CD8-positive, alpha-beta T cell (primary cell): ENCODE measurements at regions of chr20 and their contacts with region 1.

Region 1: DNA sequence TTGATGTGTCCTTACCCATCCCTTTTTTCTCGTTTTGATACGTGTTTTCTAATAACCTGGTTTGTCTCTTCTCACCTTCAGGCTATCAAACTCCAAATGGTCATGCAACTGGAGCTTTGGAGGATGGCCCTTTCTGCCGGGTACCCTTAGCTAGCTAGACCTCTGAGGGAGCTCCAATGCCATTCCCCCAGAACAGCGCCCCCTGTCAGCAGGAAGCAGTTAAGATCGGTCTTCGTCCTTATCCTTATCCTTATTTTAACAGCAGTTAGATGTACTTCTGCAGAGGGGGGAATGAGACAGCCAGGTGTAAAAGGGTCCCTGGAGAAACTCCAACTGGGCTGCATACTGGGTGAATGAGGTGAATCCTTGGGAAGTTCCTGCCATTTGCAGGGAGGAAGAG is 37.2 kb downstream of the SEL1L2 start:
- DNase-seq: no peak
- ATAC-seq: no peak
- H3K4me3 ChIP-seq: no peak overlapping the region
- H3K4me3 Mint-ChIP-seq: no peak overlapping the region
- H3K27ac ChIP-seq: no peak overlapping the region
- H3K27ac Mint-ChIP-seq: no peak overlapping the region
- H3K4me1 ChIP-seq: no peaks in the 10 kb centered on the region
- H3K4me1 Mint-ChIP-seq: no peaks in the 10 kb centered on the region
- H3K27me3 ChIP-seq: no peaks in the 10 kb centered on the region
- H3K27me3 Mint-ChIP-seq: no peaks in the 10 kb centered on the region
- CTCF ChIP-seq: no peak

Region 2: GRCh38 chr20:13930281-13930680 is 22.9 kb before region 1 on chr20:
- CTCF ChIA-PET with region 1: no interaction called
- POLR2A ChIA-PET with region 1: no interaction called
- intact Hi-C with region 1: no loop called
- DNase-seq: no peak
- ATAC-seq: no peak
- H3K4me3 ChIP-seq: no peak overlapping the region
- H3K4me3 Mint-ChIP-seq: no peak overlapping the region
- H3K27ac ChIP-seq: no peak overlapping the region
- H3K27ac Mint-ChIP-seq: no peak overlapping the region
- H3K4me1 ChIP-seq: no peaks in the 10 kb centered on the region
- H3K4me1 Mint-ChIP-seq: no peaks in the 10 kb centered on the region
- H3K27me3 ChIP-seq: no peaks in the 10 kb centered on the region
- H3K27me3 Mint-ChIP-seq: no peaks in the 10 kb centered on the region
- CTCF ChIP-seq: no peak

Region 3: GRCh38 chr20:14012671-14013070 is 59.4 kb after region 1 on chr20:
- CTCF ChIA-PET with region 1: no interaction called
- POLR2A ChIA-PET with region 1: no interaction called
- intact Hi-C with region 1: loop called in 1 of 2 experiments (anchors 10 kb)
- DNase-seq: no peak
- ATAC-seq: no peak
- H3K4me3 ChIP-seq: no peak overlapping the region
- H3K4me3 Mint-ChIP-seq: no peak overlapping the region
- H3K27ac ChIP-seq: no peak overlapping the region
- H3K27ac Mint-ChIP-seq: no peak overlapping the region
- H3K4me1 ChIP-seq: no peaks in the 10 kb centered on the region
- H3K4me1 Mint-ChIP-seq: no peaks in the 10 kb centered on the region
- H3K27me3 ChIP-seq: no peaks in the 10 kb centered on the region
- H3K27me3 Mint-ChIP-seq: no peaks in the 10 kb centered on the region
- CTCF ChIP-seq: no peak

Region 4: DNA sequence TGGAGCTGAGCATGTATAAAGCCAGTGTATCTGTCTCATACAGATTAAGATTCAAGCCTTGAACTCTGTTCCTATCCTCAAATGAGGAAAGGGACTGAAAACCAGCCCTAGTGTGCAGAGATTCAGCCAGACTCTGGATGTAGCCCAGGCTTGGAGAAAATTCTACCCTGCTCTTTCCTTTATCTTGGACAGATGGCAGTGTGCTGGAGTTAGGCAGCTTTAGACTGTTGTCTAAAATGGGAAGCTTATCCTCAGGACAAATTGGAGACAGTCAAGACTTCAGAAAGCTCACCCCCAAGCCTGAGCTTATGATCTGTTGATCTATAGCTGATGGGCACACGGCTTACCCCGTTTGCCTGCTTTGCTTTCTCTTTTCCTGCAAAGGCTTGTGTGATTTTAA is 1562.5 kb after region 1 on chr20:
- CTCF ChIA-PET with region 1: no interaction called
- POLR2A ChIA-PET with region 1: no interaction called
- intact Hi-C with region 1: no loop called
- DNase-seq: no peak
- ATAC-seq: no peak
- H3K4me3 ChIP-seq: no peak overlapping the region
- H3K4me3 Mint-ChIP-seq: no peak overlapping the region
- H3K27ac ChIP-seq: no peak overlapping the region
- H3K27ac Mint-ChIP-seq: no peak overlapping the region
- H3K4me1 ChIP-seq: no peaks in the 10 kb centered on the region
- H3K4me1 Mint-ChIP-seq: no peaks in the 10 kb centered on the region
- H3K27me3 ChIP-seq: no peaks in the 10 kb centered on the region
- H3K27me3 Mint-ChIP-seq: no peaks in the 10 kb centered on the region
- CTCF ChIP-seq: no peak